Activated naive CD4-positive, alpha-beta T cell treated with anti-CD3 and anti-CD28 coated beads for 36 hours (primary cell): ENCODE measurements at regions of chr19 and their contacts with region 1.

Region 1: DNA sequence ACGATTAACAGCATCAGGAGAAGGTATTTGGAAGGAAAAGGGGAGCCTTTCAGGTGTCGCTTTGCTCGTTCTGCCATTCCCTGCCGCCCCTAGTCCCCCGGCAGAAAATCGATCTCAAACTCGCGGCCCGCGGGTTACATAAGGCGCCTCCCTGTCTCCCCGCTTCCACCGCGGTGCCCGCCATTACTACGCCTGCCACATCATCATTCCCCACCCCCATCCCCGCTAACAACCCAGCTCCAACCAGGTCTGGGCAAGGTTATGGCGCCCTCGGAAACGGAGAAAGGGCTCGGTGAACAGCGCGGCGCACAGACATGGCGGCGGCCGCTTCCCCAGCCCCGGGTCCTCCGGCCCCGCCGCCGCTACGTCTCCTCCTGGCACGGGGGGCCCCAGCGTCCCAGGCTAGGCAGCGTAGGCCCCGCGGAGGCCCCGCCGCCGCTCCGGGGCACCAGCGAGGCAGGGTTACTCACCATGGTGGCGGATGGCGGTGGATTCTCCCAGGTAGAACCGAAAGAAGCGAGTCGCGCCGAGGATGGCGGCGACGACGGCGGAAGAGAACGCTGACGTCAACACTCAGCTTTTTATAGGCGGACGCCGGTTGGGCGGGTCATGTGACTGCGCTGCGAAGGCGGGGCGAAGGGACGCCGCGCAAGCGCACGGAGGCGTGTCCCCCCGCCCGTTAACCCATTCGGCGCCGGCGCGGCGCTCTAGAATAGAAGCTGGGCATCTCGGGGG is at the start of gene EEF2:
- DNase-seq: peak; percentile 88
- H3K4me3 Mint-ChIP-seq: peak within 1 kb of the TSS; percentile 91
- H3K27ac Mint-ChIP-seq: peak within 1 kb of the TSS; percentile 94
- H3K4me1 Mint-ChIP-seq: peaks cover 52% of the 10 kb centered on the region
- H3K27me3 Mint-ChIP-seq: no peaks in the 10 kb centered on the region
- total RNA-seq, gene EEF2: 3,747 to 3,914 TPM

Region 2: GRCh38 chr19:3970808-3971598 is 14.1 kb before region 1 on chr19 and contains the start of gene DAPK3:
- CTCF ChIA-PET with region 1: interaction called, 6 read pairs
- intact Hi-C with region 1: loop called (anchors 2 kb)
- DNase-seq: peak; percentile 96
- H3K4me3 Mint-ChIP-seq: peak within 1 kb of the TSS; percentile 84
- H3K27ac Mint-ChIP-seq: peak within 1 kb of the TSS; percentile 44
- H3K4me1 Mint-ChIP-seq: peaks cover 22% of the 10 kb centered on the region
- H3K27me3 Mint-ChIP-seq: no peaks in the 10 kb centered on the region
- total RNA-seq, gene DAPK3: 19.3 to 19.6 TPM

Region 3: DNA sequence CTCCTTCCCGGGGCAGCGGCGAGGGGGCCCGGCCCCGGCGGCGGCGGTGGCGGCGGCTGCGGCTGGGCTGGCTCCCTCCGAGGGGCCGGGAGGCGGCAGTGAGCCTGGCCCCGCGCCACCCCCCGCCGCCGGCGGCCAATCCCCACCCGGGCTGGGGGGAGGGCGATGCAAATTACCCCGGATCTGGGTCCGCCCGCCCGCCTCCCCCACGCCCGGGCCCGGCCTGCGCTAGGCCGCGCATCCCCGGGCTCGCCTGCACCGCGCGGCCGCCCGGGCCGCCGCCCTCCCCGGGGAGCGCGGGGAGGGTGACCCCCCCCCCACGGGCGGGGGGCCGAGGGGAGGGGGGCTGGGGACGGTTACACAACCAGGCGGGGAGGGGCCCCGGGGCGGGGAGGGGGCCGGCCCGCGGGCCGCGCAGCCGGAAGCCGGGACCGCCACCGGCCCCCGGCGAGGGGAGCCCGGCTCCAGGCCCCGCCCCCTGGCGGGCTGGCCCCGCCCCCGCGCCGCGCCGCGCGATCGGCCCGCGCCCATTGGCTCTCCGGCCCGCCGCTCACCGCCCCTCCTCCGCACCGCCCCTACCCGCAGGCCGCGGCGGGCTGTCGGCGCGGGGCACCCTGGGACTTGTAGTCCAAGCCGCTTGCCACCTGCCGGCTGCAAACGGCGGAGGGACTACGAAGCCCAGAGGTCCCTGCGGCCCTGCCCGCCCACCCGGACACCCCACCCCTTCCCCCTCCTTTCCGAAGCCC is 80.5 kb after region 1 on chr19:
- CTCF ChIA-PET with region 1: no interaction called
- intact Hi-C with region 1: loop called (anchors 2 kb)
- DNase-seq: peak; percentile 96
- H3K4me3 Mint-ChIP-seq: peak overlapping the region; percentile 56
- H3K27ac Mint-ChIP-seq: no peak overlapping the region
- H3K4me1 Mint-ChIP-seq: peaks cover 36% of the 10 kb centered on the region
- H3K27me3 Mint-ChIP-seq: no peaks in the 10 kb centered on the region

Region 4: GRCh38 chr19:4139614-4140236 is 154.7 kb after region 1 on chr19:
- CTCF ChIA-PET with region 1: interaction called, 7 read pairs
- intact Hi-C with region 1: loop called (anchors 1 kb)
- DNase-seq: peak; percentile 95
- H3K4me3 Mint-ChIP-seq: peak overlapping the region; percentile 30
- H3K27ac Mint-ChIP-seq: no peak overlapping the region
- H3K4me1 Mint-ChIP-seq: peaks cover 8% of the 10 kb centered on the region
- H3K27me3 Mint-ChIP-seq: peaks cover 2% of the 10 kb centered on the region

Region 5: DNA sequence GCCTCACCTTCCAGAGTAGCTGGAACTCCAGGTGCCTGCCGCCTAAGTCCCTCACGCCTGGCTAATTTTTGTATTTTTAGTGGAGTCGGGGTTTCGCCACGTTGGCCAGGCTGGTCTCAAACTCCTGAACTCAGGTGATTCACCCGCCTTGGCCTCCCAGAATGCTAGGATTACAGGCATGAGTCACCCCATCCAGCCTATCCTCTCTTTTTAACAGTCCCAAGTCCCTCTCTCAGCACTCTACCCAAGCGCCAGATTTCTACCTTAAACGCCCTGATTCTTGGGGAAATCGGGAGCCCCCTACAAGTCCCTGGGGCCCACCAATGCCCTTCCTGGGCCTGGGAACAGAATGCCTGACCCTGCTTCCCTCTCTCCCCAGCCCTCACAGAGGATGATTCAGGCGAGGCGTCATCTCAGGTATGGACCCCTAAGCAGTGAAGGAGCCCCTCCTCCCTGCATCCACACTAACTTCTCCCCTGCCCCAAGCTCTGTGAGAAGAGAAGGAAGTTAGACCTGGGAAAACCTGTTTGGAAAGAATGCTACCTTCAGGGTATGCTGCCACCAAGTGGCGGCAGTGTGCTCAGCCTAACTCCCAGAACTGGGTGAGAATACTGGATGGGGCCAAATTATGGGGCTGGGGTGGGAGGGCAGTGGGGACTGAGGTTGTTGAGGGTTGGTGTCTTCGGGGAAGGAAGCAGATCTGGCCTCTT is 223.5 kb after region 1 on chr19:
- CTCF ChIA-PET with region 1: no interaction called
- intact Hi-C with region 1: loop called (anchors 1 kb)
- DNase-seq: no peak
- H3K4me3 Mint-ChIP-seq: no peak overlapping the region
- H3K27ac Mint-ChIP-seq: no peak overlapping the region
- H3K4me1 Mint-ChIP-seq: peaks cover 2% of the 10 kb centered on the region
- H3K27me3 Mint-ChIP-seq: no peaks in the 10 kb centered on the region

Region 6: DNA sequence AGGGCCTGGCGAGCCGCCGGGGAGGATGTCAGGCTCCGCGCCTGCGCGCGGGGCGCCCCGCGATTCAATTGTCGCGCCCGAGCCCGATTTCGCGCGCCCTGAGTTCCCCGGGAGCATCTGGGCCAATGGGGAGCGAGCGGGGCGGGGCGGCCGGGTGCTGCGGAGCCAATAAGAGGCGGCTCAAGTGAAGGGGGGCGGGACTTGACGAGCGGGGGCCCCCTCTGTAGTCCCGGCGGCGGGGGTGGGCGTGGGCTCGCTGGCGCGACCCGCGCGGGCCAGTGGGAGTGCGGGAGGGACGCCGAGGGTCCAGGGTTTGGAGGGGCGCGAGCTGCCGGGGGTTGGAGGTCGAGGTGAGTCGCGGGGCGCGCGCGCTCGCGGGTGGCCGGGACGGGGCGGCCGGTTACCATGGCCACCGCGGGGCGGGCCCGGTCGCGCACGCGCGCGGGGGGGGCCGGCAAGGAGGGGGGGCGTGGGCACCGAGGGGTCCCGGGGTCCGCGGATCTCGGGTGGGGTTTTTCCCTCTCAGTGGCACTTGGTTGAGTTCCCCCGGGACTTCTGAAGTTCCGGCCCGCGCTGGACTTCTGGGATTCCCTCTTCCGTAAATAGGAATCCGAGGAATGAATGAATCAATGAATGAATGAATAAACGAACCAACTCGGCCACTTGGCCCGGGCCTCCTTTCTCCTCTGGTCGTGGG is 925.0 kb after region 1 on chr19:
- CTCF ChIA-PET with region 1: no interaction called
- intact Hi-C with region 1: loop called (anchors 5 kb)
- DNase-seq: peak; percentile 97
- H3K4me3 Mint-ChIP-seq: peak overlapping the region; percentile 85
- H3K27ac Mint-ChIP-seq: peak overlapping the region; percentile 86
- H3K4me1 Mint-ChIP-seq: peaks cover 53% of the 10 kb centered on the region
- H3K27me3 Mint-ChIP-seq: no peaks in the 10 kb centered on the region